Adrenal gland (tissue), 19 donors: ENCODE measurements at regions of chr11 and their contacts with region 1.

Region 1: GRCh38 chr11:65779851-65780577 is 762 bp downstream of the AP5B1 start:
- DNase-seq: peak; percentile 75 to 87 (median 80)
- H3K4me3 ChIP-seq: peak overlapping the region; percentile 21 to 87 (median 73)
- H3K27ac ChIP-seq: peak overlapping the region in 4 of 5 donors; percentile 64 to 75 (median 68)
- H3K4me1 ChIP-seq: peaks cover 8 to 15% of the 10 kb centered on the region in 2 donors
- H3K27me3 ChIP-seq: peaks cover 2% of the 10 kb centered on the region
- CTCF ChIP-seq: peak; percentile 79 to 96 (median 87)
- POLR2A ChIP-seq: peak; percentile 53 to 60

Region 2: GRCh38 chr11:65639623-65640482 is 140.2 kb before region 1 on chr11:
- intact Hi-C with region 1: no loop called
- DNase-seq: peak in 4 of 7 donors; percentile 58 to 80 (median 64)
- H3K4me3 ChIP-seq: peak overlapping the region in 1 of 4 donors; percentile 72
- H3K27ac ChIP-seq: peak overlapping the region; percentile 24 to 94 (median 68)
- H3K4me1 ChIP-seq: peaks cover 26 to 48% of the 10 kb centered on the region in 2 donors
- H3K27me3 ChIP-seq: no peaks in the 10 kb centered on the region
- CTCF ChIP-seq: no peak
- POLR2A ChIP-seq: no peak

Region 3: DNA sequence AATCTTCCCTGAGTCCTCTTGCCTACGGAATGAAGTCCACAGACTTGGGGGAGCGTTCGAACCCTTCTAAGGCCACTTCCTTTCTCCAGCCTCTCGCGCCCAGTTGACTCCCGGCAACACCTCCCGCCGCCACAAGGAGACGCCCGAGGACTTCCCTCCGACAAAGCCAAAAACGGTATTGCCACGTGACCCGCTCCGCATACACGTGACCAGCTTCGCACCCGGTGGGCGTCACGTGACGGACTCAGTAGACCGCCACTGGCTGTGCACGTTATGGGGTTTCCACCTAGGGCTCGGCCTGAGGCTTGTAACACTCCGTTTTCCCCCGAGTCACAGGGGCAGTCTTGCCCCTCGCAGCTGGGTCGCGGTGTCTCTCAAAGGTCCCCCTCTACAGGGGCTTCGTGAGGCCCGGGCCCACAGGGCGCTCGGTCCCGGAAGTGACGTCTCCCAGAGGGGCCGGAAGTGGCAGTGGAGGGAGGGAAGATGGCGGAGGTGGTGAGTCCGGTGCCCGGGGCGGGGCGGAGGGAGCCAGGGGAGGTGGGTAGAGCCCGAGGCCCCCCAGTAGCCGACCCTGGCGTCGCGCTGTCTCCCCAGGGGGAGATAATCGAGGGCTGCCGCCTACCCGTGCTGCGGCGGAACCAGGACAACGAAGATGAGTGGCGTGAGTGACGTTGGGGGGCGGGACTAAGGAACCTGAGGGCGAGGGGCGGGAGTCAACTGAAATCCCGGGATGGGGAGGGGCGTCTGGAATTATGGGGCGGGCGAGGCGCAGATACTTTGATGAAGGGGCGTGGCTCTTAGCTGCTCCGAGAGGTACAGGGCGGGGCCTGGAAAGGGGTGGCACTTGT is 68.0 kb before region 1 on chr11 and contains the start of gene KAT5:
- intact Hi-C with region 1: loop called in 1 of 2 experiments (anchors 5 kb)
- DNase-seq: peak; percentile 98 to 100 (median 99)
- H3K4me3 ChIP-seq: peak within 1 kb of the TSS; percentile 21 to 66 (median 54)
- H3K27ac ChIP-seq: peak within 1 kb of the TSS; percentile 86 to 99 (median 99)
- H3K4me1 ChIP-seq: peaks cover 7 to 15% of the 10 kb centered on the region in 2 donors
- H3K27me3 ChIP-seq: no peaks in the 10 kb centered on the region
- CTCF ChIP-seq: peak; percentile 93 to 100 (median 100)
- POLR2A ChIP-seq: peak; percentile 81 to 87
- total RNA-seq, gene KAT5: 55.9 to 89.6 (median 62.8) TPM

Region 4: DNA sequence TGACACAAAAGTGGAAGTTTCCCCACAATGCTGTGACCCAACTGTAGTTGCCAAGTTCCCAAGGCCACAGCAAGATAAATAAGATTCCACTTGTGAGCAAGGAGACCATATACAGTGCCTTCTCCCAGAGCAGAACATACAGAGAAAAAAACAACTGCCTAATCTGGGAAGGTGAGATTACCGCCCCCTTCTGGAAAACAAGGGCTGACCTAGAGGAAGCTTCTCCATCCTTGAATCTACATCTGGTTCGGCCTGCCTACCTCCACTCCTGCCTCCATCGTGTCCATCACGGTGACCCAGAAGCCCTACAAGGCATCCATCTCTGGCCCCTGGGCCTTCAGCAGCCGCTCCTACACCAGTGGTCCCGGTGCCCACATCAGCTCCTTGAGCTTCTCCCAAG is 53.4 kb before region 1 on chr11:
- intact Hi-C with region 1: no loop called
- DNase-seq: no peak
- H3K4me3 ChIP-seq: no peak overlapping the region
- H3K27ac ChIP-seq: no peak overlapping the region
- H3K4me1 ChIP-seq: no peaks in the 10 kb centered on the region
- H3K27me3 ChIP-seq: no peaks in the 10 kb centered on the region
- CTCF ChIP-seq: no peak
- POLR2A ChIP-seq: no peak

Region 5: GRCh38 chr11:65793144-65793581 is 13.1 kb after region 1 on chr11:
- intact Hi-C with region 1: no loop called
- DNase-seq: no peak
- H3K4me3 ChIP-seq: no peak overlapping the region
- H3K27ac ChIP-seq: no peak overlapping the region
- H3K4me1 ChIP-seq: no peaks in the 10 kb centered on the region
- H3K27me3 ChIP-seq: peaks cover 28% of the 10 kb centered on the region
- CTCF ChIP-seq: no peak
- POLR2A ChIP-seq: no peak

Region 6: DNA sequence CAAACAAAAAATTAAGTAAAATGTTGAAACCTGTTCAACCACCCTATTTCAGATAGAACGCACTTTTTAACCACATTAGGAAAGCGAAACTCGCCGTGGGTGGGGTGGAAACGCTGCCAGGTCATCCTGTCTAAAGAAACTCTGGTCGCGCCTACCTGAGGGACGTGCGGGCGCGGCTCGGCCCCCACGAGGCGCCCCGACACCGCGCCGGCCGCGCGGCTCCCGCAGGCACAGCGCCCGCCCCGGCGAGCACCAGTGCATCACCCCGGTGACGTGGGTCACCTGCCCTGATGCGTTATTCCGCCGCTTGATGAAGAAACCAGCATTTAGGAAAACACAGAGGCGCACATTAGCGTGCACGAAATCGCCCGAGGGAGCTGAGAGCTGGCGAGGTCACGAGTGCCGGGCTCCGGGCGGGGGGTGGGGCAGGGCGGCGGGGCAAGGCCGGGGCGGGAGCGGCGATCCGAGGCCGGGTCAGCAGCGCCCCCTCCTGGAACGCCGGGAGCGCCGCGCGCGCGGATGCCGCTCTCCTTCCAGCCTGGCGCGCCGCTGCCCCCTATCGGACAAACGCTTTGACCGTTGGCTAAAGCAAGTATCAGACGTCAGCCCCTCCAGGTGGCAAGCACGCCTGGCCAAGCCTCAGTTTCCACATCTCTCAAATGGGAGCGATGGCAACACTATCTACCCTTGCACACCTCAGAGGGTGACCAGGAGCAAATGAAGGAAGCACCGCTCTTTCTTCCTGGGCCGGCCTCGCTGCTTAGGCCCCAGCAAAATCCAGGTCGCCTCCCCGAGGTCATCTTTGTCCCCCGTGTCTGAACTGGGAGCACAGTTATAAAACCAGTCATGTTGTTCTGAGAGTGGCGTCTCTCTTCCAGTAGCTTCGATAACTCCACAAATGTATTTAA is 38.1 kb after region 1 on chr11:
- intact Hi-C with region 1: loop called (anchors 1 to 5 kb)
- DNase-seq: peak; percentile 89 to 96 (median 95)
- H3K4me3 ChIP-seq: peak overlapping the region in 3 of 4 donors; percentile 29 to 73 (median 48)
- H3K27ac ChIP-seq: peak overlapping the region in 4 of 5 donors; percentile 20 to 83 (median 73)
- H3K4me1 ChIP-seq: peaks cover 0 to 12% of the 10 kb centered on the region in 2 donors
- H3K27me3 ChIP-seq: no peaks in the 10 kb centered on the region
- CTCF ChIP-seq: peak; percentile 79 to 100 (median 94)
- POLR2A ChIP-seq: peak in 1 of 2 donors; percentile 8

Region 7: DNA sequence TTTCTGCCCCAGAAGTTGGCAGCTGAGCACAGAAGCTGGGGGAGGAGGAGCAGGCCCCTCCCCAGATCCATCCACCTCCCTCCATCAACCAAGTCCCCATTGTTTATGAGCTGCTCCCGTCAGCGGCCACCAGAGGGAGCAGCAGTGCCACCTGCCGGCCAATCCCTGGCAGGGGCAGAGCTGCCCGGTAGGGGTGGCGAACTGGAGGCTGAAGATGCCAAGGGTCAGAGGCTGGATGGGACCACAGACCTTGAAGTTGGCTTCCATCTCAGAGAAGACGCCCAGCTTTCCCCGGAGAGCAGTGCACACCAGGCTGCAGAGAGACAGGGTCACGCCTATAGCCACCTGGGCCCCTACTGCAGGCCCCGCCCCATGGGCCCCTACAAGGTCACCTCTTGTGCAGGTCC is 104.7 kb after region 1 on chr11:
- intact Hi-C with region 1: no loop called
- DNase-seq: peak; percentile 73 to 84 (median 79)
- H3K4me3 ChIP-seq: no peak overlapping the region
- H3K27ac ChIP-seq: no peak overlapping the region
- H3K4me1 ChIP-seq: peaks cover 15 to 21% of the 10 kb centered on the region in 2 donors
- H3K27me3 ChIP-seq: no peaks in the 10 kb centered on the region
- CTCF ChIP-seq: peak; percentile 97 to 100 (median 98)
- POLR2A ChIP-seq: no peak